ENCODE measurements at regions of chr1 and their contacts with region 1.

Region 1: DNA sequence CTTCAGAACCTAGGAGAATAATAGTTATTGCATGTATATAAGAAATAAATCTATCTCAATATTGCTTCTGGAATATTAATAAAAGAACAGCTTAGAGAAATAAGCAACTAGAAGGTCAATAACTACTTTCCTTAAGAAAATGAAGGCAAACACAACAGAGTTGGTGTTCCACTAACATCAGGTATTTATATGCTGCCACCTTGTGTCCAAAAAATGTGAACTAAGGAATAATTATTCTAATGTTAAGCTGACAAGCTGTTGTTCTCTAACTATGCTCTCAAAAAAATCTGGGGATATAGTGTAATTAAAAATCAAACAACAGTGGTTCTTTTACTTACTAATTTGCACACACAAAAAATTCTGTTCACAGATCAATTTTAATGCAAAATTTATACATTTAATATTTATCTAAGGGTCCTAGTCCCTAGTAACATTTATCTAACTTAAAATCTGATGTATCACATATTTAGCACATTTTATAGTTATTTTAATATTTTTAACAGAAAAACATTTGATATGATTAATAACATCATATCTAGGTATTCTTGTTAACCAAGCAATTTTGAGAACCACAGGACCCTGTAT is 39.6 kb downstream of the UCHL5 start:
- DNase-seq: no peak
- ATAC-seq: peak; percentile 79

Region 2: DNA sequence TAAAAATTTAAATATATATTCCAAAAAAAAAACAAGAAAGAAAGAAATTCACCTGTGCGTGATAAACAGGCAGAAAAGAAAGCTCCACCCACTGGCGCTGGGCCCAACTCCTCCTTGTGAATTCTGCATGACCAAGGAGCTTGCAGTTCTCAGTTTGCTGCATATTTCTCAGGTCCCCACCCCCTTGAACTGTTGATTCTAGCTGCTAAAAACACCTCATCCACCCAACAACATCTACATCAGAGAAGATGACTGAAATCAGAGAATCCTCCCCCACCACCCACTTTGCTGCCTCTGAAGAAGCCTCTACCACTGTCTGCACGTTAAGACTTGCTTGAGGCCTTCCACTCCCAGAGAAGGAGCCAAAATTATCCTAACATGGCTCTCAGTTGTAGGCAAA is 105.9 kb before region 1 on chr1:
- intact Hi-C with region 1: loop called in 1 of 2 experiments (anchors 10 kb)
- DNase-seq: peak in 1 of 2 donors; percentile 12
- ATAC-seq: no peak

Region 3: GRCh38 chr1:193229141-193229561 is 209.6 kb after region 1 on chr1:
- intact Hi-C with region 1: no loop called
- DNase-seq: no peak
- ATAC-seq: no peak

Measured in left colon (tissue), 2 donors.